ENCODE measurements at regions of chr1 and their contacts with region 1.

Region 1: GRCh38 chr1:239672256-239672655 is 285.9 kb downstream of the CHRM3 start:
- DNase-seq: no peak
- H3K4me3 ChIP-seq: no peak overlapping the region
- H3K27ac ChIP-seq: no peak overlapping the region
- H3K4me1 ChIP-seq: no peaks in the 10 kb centered on the region
- H3K27me3 ChIP-seq: no peaks in the 10 kb centered on the region
- CTCF ChIP-seq: no peak

Region 2: GRCh38 chr1:239735111-239735510 is 62.9 kb after region 1 on chr1:
- CTCF ChIA-PET with region 1: no interaction called
- POLR2A ChIA-PET with region 1: interaction called, 10 read pairs
- intact Hi-C with region 1: no loop called
- DNase-seq: no peak
- H3K4me3 ChIP-seq: no peak overlapping the region
- H3K27ac ChIP-seq: no peak overlapping the region
- H3K4me1 ChIP-seq: no peaks in the 10 kb centered on the region
- H3K27me3 ChIP-seq: no peaks in the 10 kb centered on the region
- CTCF ChIP-seq: no peak

Measured in PC-9 (cell line).